ENCODE measurements at regions of chr9 and their contacts with region 1.

Region 1: GRCh38 chr9:87516222-87516925 is 18.7 kb downstream of the DAPK1 start:
- H3K4me3 ChIP-seq: no peak overlapping the region
- H3K27ac ChIP-seq: no peak overlapping the region
- H3K4me1 ChIP-seq: no peaks in the 10 kb centered on the region
- CTCF ChIP-seq: no peak

Region 2: GRCh38 chr9:87359264-87359663 is 157.1 kb before region 1 on chr9:
- CTCF ChIA-PET with region 1: interaction called, 10 read pairs
- POLR2A ChIA-PET with region 1: no interaction called
- H3K4me3 ChIP-seq: no peak overlapping the region
- H3K27ac ChIP-seq: no peak overlapping the region
- H3K4me1 ChIP-seq: no peaks in the 10 kb centered on the region
- CTCF ChIP-seq: no peak

Region 3: DNA sequence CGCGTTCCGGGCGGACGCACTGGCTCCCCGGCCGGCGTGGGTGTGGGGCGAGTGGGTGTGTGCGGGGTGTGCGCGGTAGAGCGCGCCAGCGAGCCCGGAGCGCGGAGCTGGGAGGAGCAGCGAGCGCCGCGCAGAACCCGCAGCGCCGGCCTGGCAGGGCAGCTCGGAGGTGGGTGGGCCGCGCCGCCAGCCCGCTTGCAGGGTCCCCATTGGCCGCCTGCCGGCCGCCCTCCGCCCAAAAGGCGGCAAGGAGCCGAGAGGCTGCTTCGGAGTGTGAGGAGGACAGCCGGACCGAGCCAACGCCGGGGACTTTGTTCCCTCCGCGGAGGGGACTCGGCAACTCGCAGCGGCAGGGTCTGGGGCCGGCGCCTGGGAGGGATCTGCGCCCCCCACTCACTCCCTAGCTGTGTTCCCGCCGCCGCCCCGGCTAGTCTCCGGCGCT is 18.7 kb before region 1 on chr9 and contains the start of gene DAPK1:
- CTCF ChIA-PET with region 1: no interaction called
- POLR2A ChIA-PET with region 1: interaction called, 10 read pairs
- H3K4me3 ChIP-seq: peak within 1 kb of the TSS; percentile 73
- H3K27ac ChIP-seq: peak within 1 kb of the TSS; percentile 87
- H3K4me1 ChIP-seq: peaks cover 9% of the 10 kb centered on the region; the same call in 1 of the 2 replicates
- CTCF ChIP-seq: 0 out of 2 replicates have a peak, but pooled peaks have one; percentile 29

Region 4: DNA sequence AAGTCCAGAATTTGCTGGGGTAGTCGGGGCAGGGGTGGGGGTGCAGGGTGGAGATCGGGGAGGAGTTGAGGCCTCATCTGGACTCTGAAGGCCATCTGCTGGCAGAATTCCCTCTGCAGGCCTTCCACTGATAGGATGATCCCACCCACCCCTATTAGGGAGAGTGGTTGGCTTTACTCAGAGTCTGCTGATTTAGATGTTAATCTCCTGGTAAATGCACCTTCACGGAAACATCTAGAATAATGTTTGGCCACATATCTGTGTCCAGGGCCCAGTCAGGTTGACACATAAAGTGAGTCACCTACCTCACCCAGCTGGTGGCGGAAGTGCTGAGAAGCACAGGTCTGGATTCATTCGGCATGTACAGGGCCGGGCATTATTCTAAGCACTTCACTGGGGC is 31.3 kb after region 1 on chr9:
- CTCF ChIA-PET with region 1: no interaction called
- POLR2A ChIA-PET with region 1: no interaction called
- H3K4me3 ChIP-seq: no peak overlapping the region
- H3K27ac ChIP-seq: no peak overlapping the region
- H3K4me1 ChIP-seq: no peaks in the 10 kb centered on the region
- CTCF ChIP-seq: no peak

Region 5: DNA sequence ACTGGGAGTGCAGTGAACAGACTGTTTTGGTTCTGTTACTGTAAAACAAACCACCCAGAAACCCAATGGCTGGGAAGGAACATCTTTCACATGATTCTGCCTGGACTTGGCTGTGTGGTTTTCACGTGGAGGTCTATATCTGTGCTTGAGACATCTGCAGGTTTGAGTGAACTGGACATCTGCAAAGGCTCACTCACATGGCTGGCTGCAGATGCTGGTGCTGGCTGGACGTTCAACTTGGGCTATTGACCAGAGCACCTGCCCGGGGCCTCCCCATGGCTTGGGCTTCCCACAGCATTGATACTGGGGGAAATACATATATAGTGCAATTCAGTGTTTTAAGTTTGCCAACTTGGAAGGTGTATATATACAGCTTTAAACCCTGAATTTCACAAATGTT is 216.4 kb after region 1 on chr9:
- CTCF ChIA-PET with region 1: no interaction called
- POLR2A ChIA-PET with region 1: no interaction called
- H3K4me3 ChIP-seq: no peak overlapping the region
- H3K27ac ChIP-seq: no peak overlapping the region
- H3K4me1 ChIP-seq: no peaks in the 10 kb centered on the region
- CTCF ChIP-seq: no peak